ENCODE measurements at regions of chr9 and their contacts with region 1.

Region 1: DNA sequence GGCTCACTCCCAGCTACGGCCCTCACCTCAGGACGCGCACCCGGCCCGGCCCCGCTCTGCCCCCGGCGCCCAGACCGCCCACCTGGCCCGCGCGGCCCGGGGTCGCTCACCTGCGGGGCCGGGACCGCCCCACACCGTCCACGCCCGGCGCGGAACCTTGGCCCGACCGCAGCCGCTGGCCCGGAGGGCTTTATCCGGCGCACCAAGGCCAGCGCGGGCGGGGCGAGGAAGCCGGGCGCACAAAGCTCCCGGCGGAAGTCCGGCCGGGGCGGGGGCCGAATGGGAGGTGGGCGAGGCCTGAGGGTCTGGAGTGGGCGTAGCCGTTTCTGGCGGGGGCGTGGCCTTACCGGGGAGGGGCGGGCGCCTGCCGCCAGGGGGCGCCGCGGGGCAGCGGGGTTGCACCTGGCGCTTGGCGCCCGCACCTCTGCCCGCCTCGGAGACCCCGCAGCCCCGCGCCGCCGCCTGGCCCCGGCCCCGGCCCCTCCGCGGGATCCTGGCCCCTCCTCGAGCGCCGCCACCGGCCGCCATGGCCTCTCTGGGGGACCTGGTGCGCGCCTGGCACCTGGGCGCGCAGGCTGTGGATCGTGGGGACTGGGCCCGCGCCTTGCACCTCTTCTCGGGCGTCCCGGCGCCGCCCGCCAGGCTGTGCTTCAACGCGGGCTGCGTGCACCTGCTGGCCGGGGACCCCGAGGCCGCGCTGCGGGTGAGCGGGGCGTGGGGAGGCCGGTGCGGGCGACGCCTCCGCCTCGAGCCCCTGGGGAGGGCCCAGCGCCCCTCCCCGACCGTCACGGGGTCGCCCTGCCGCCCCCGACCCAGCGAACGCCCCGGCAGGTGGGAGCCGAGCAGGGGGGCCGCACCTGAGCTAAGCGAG is at the starts of genes EXD3 and NOXA1:
- DNase-seq: peak; percentile 80
- H3K4me3 ChIP-seq: peak within 1 kb of the TSS; percentile 61 to 93 (median 92)
- H3K27ac ChIP-seq: peak within 1 kb of the TSS; percentile 46
- H3K4me1 ChIP-seq: peaks cover 14% of the 10 kb centered on the region
- H3K27me3 ChIP-seq: no peaks in the 10 kb centered on the region
- CTCF ChIP-seq: peak; percentile 77
- POLR2A ChIP-seq: no peak
- total RNA-seq, gene EXD3: 26.6 and 30.3 TPM in 2 replicates
- total RNA-seq, gene NOXA1: 0.91 and 1.3 TPM in 2 replicates

Region 2: DNA sequence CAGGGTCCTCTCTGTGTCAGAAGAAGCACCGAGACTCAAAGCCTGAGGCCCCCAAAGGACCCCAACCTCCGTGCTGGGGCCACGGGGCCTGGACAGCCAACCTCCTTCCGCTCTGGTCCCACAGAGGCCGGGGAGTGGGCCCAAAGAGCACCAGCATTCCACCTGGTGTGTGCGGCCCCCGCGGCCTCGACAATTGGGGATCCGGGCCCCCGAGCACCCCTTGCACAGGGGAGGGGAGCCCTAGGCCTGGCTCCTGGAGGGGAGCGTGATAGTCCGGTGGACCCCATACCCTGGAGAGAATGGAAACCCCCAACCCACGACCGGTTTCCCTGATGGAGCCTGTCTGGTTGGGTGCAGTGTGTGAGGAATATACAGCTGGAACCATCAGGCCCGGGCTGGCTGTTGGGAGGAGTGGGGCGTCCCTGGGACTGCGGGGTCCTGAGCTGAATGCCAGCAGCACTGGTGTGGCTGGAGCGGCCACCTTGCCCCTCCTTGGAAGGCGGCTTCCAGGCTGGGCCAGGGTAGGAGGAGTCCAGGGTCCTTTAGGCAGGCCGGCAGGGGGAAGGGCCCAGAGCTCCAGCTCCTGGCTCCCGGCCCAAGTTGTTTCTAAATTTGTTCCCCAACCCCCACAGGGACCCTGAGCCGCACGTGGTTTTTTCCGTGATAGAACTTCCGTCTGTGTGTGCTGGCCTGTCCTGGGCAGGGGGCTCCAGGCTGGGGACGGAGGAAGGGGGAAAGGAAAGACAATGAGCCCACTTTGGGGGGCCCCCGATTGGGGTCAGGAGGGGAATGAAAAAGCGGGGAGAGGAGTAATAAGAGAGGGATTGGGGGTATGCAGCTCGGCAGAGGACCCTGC is 146.5 kb before region 1 on chr9:
- CTCF ChIA-PET with region 1: no interaction called
- POLR2A ChIA-PET with region 1: no interaction called
- dilution Hi-C with region 1: no loop called
- intact Hi-C with region 1: no loop called
- DNase-seq: peak; percentile 45
- H3K4me3 ChIP-seq: peak overlapping the region in 1 of 3 experiments; percentile 60
- H3K27ac ChIP-seq: peak overlapping the region; percentile 91
- H3K4me1 ChIP-seq: peaks cover 24% of the 10 kb centered on the region
- H3K27me3 ChIP-seq: no peaks in the 10 kb centered on the region
- CTCF ChIP-seq: no peak
- POLR2A ChIP-seq: no peak

Region 3: GRCh38 chr9:137286975-137287383 is 136.3 kb before region 1 on chr9:
- CTCF ChIA-PET with region 1: interaction called, 17 read pairs
- POLR2A ChIA-PET with region 1: no interaction called
- dilution Hi-C with region 1: no loop called
- intact Hi-C with region 1: no loop called
- DNase-seq: peak; percentile 79
- H3K4me3 ChIP-seq: no peak overlapping the region
- H3K27ac ChIP-seq: no peak overlapping the region
- H3K4me1 ChIP-seq: peaks cover 4% of the 10 kb centered on the region
- H3K27me3 ChIP-seq: no peaks in the 10 kb centered on the region
- CTCF ChIP-seq: peak; percentile 65 to 86
- POLR2A ChIP-seq: no peak

Region 4: DNA sequence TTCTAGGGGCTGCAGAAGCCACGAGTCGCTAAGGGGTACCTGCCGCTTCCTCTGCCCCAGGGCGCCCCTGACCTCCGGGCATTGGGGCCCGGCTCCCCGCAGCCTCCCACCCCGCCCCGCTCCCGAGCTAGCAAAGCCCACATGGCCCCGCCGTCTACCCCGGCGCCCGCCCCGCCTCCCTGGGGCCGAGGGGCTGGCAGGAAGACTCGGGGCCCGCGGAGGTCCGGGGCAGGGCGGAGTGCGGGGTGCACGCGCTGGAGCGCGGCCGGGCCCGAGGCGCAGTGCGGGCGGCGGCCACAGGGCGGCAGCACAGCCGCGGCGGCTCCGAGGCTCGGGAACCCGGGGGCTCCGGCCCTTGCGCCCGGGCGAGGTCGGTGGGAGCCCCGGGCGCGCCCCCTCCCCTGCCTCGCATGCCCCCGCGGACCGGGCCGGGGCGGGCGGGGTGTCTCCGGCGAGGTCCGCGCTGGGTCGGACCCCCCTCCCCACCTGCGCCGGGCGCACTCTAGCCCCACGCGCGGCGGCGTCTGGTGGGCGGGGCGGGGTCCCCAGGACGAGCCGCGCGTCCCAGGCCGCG is 127.9 kb before region 1 on chr9:
- CTCF ChIA-PET with region 1: interaction called, 12 read pairs
- POLR2A ChIA-PET with region 1: no interaction called
- dilution Hi-C with region 1: no loop called
- intact Hi-C with region 1: no loop called
- DNase-seq: peak; percentile 43
- H3K4me3 ChIP-seq: peak overlapping the region in 2 of 3 experiments; percentile 31 to 64
- H3K27ac ChIP-seq: peak overlapping the region; percentile 58
- H3K4me1 ChIP-seq: peaks cover 44% of the 10 kb centered on the region
- H3K27me3 ChIP-seq: no peaks in the 10 kb centered on the region
- CTCF ChIP-seq: peak; percentile 44 to 76
- POLR2A ChIP-seq: peak; percentile 22

Region 5: DNA sequence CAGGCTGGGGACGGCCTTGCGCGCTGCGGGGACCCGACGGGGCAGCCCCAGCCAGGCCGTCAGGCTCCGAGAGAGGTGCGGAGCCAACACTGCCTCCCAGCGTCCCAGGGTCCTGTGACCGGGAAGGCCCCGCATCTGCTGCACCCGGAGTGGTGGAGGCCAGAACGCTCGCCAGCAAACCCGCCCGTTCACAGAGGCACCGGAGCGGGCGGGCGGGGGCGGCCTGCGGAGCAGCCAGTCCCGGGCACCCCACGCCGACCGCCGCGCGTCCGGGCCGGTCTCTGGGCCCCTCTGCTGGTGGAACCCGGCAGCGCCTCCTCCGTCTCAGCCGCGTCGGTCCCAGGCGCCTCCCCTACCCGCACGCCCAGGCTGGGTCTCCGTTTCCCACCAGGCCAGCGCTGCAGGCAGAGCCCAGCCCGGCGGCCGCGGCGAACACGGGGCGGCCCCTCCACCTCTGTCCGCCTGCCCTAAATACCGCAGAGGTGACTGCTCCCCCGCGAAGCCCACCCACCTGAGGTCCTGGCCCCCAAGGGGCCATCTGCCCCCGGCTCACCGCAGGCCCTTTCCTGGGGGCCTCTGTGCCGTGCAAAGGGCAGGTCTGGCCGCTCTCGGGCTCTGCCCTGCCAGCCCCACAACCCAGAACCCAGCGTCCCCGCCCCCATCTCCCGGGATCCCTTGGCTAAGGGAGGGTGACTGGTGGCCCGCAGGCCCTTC is 16.2 kb before region 1 on chr9:
- CTCF ChIA-PET with region 1: interaction called, 29 read pairs
- POLR2A ChIA-PET with region 1: no interaction called
- dilution Hi-C with region 1: no loop called
- intact Hi-C with region 1: no loop called
- DNase-seq: peak; percentile 85
- H3K4me3 ChIP-seq: peak overlapping the region in 1 of 3 experiments; percentile 17
- H3K27ac ChIP-seq: no peak overlapping the region
- H3K4me1 ChIP-seq: peaks cover 24% of the 10 kb centered on the region
- H3K27me3 ChIP-seq: no peaks in the 10 kb centered on the region
- CTCF ChIP-seq: peak; percentile 83 to 87
- POLR2A ChIP-seq: no peak

Region 6: GRCh38 chr9:137435980-137436760 is 12.9 kb after region 1 on chr9:
- CTCF ChIA-PET with region 1: interaction called, 31 read pairs
- POLR2A ChIA-PET with region 1: no interaction called
- dilution Hi-C with region 1: no loop called
- intact Hi-C with region 1: no loop called
- DNase-seq: no peak
- H3K4me3 ChIP-seq: no peak overlapping the region
- H3K27ac ChIP-seq: no peak overlapping the region
- H3K4me1 ChIP-seq: no peaks in the 10 kb centered on the region
- H3K27me3 ChIP-seq: no peaks in the 10 kb centered on the region
- CTCF ChIP-seq: no peak
- POLR2A ChIP-seq: no peak

Region 7: GRCh38 chr9:137445275-137445807 is 22.1 kb after region 1 on chr9:
- CTCF ChIA-PET with region 1: interaction called, 31 read pairs
- POLR2A ChIA-PET with region 1: no interaction called
- dilution Hi-C with region 1: no loop called
- intact Hi-C with region 1: loop called (anchors 1 kb)
- DNase-seq: peak; percentile 78
- H3K4me3 ChIP-seq: no peak overlapping the region
- H3K27ac ChIP-seq: no peak overlapping the region
- H3K4me1 ChIP-seq: no peaks in the 10 kb centered on the region
- H3K27me3 ChIP-seq: no peaks in the 10 kb centered on the region
- CTCF ChIP-seq: peak; percentile 77 to 87
- POLR2A ChIP-seq: no peak

Region 8: GRCh38 chr9:137521405-137521985 is 98.3 kb after region 1 on chr9:
- CTCF ChIA-PET with region 1: interaction called, 5 read pairs
- POLR2A ChIA-PET with region 1: no interaction called
- dilution Hi-C with region 1: no loop called
- intact Hi-C with region 1: loop called (anchors 10 kb)
- DNase-seq: no peak
- H3K4me3 ChIP-seq: no peak overlapping the region
- H3K27ac ChIP-seq: no peak overlapping the region
- H3K4me1 ChIP-seq: no peaks in the 10 kb centered on the region
- H3K27me3 ChIP-seq: no peaks in the 10 kb centered on the region
- CTCF ChIP-seq: no peak
- POLR2A ChIP-seq: no peak

Region 9: GRCh38 chr9:137816531-137817235 is 393.4 kb after region 1 on chr9:
- CTCF ChIA-PET with region 1: no interaction called
- POLR2A ChIA-PET with region 1: no interaction called
- dilution Hi-C with region 1: no loop called
- intact Hi-C with region 1: no loop called
- DNase-seq: no peak
- H3K4me3 ChIP-seq: no peak overlapping the region
- H3K27ac ChIP-seq: no peak overlapping the region
- H3K4me1 ChIP-seq: no peaks in the 10 kb centered on the region
- H3K27me3 ChIP-seq: no peaks in the 10 kb centered on the region
- CTCF ChIP-seq: no peak
- POLR2A ChIP-seq: no peak